ENCODE measurements at regions of chr11 and their contacts with region 1.

Region 1: GRCh38 chr11:33996498-33997454 is 54.8 kb upstream of the CAPRIN1 start:
- DNase-seq: peak; percentile 65
- ATAC-seq: peak; percentile 100
- H3K4me3 ChIP-seq: no peak overlapping the region
- H3K27ac ChIP-seq: no peak overlapping the region
- H3K4me1 ChIP-seq: no peaks in the 10 kb centered on the region
- H3K27me3 ChIP-seq: peaks cover 16% of the 10 kb centered on the region
- CTCF ChIP-seq: peak; percentile 76
- POLR2A ChIP-seq: no peak
- RAD21 ChIP-seq: peak; percentile 80

Region 2: GRCh38 chr11:33912405-33913361 is 84.1 kb before region 1 on chr11:
- CTCF ChIA-PET with region 1: no interaction called
- POLR2A ChIA-PET with region 1: no interaction called
- dilution Hi-C with region 1: no loop called
- in situ Hi-C with region 1: no loop called
- intact Hi-C with region 1: no loop called
- DNase-seq: peak; percentile 90
- ATAC-seq: peak; percentile 83
- H3K4me3 ChIP-seq: no peak overlapping the region
- H3K27ac ChIP-seq: no peak overlapping the region
- H3K4me1 ChIP-seq: peaks cover 3% of the 10 kb centered on the region; the same call in 1 of the 2 replicates
- H3K27me3 ChIP-seq: peaks cover 18% of the 10 kb centered on the region
- CTCF ChIP-seq: no peak
- POLR2A ChIP-seq: no peak
- RAD21 ChIP-seq: no peak

Region 3: GRCh38 chr11:34051349-34052035 is 54.7 kb after region 1 on chr11 and contains the start of gene CAPRIN1:
- CTCF ChIA-PET with region 1: no interaction called
- POLR2A ChIA-PET with region 1: no interaction called
- dilution Hi-C with region 1: no loop called
- in situ Hi-C with region 1: no loop called
- intact Hi-C with region 1: loop called (anchors 2 kb)
- DNase-seq: peak; percentile 83
- ATAC-seq: peak; percentile 87
- H3K4me3 ChIP-seq: peak within 1 kb of the TSS; percentile 67
- H3K27ac ChIP-seq: peak within 1 kb of the TSS; percentile 99
- H3K4me1 ChIP-seq: peaks cover 4% of the 10 kb centered on the region; the same call in 1 of the 2 replicates
- H3K27me3 ChIP-seq: no peaks in the 10 kb centered on the region
- CTCF ChIP-seq: no peak
- POLR2A ChIP-seq: peak; percentile 70
- RAD21 ChIP-seq: no peak
- total RNA-seq, gene CAPRIN1: 253 and 266 TPM in 2 replicates

Region 4: DNA sequence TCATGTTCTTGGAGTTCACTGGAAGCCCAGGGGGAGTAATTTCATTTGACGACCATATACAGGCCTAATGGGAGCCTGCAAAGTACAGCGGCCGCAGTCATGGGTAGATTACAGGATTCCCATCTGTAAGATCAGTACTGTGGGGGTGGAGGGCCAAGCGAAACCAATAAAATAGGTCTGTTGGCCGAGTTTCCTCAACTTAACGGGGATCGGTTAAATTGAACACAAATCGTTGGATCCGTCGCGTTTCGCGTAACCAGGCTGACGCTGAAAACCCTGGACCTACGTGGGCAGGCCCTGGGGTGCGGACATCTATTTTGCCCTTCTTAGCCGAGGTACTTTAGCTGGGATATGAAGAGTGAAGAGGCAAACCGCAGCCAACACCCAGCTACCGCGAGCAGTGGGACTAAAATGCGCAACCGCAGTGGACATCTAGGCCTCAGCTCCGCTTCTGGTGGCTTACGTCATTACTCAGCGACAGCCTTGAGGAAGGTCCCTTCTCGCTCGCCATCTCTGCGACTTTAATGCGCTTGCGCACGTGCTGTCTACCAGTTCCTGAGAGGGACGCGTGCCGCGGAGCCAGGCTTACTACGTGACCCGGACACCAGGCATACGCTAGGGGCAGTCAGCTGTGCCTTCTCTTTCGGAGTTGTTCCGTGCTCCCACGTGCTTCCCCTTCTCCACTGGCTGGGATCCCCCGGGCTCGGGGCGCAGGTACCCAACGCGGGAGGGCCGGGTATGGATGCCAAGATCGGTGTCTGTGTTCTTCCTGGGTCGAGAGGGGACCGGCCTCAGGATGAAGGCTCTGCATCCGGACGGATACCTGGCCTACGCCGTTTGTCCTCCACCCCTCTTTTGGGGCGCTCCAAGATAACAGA is 108.5 kb after region 1 on chr11 and contains the start of gene NAT10:
- CTCF ChIA-PET with region 1: no interaction called
- POLR2A ChIA-PET with region 1: no interaction called
- dilution Hi-C with region 1: no loop called
- in situ Hi-C with region 1: no loop called
- intact Hi-C with region 1: loop called (anchors 2 kb)
- DNase-seq: peak; percentile 99
- ATAC-seq: peak; percentile 89
- H3K4me3 ChIP-seq: peak within 1 kb of the TSS; percentile 62
- H3K27ac ChIP-seq: peak within 1 kb of the TSS; percentile 78
- H3K4me1 ChIP-seq: peaks cover 2% of the 10 kb centered on the region; the same call in 1 of the 2 replicates
- H3K27me3 ChIP-seq: no peaks in the 10 kb centered on the region
- CTCF ChIP-seq: no peak; the same call in 1 of the 2 replicates
- POLR2A ChIP-seq: peak; percentile 80
- RAD21 ChIP-seq: no peak
- total RNA-seq, gene NAT10: 31.9 and 34.8 TPM in 2 replicates

Region 5: DNA sequence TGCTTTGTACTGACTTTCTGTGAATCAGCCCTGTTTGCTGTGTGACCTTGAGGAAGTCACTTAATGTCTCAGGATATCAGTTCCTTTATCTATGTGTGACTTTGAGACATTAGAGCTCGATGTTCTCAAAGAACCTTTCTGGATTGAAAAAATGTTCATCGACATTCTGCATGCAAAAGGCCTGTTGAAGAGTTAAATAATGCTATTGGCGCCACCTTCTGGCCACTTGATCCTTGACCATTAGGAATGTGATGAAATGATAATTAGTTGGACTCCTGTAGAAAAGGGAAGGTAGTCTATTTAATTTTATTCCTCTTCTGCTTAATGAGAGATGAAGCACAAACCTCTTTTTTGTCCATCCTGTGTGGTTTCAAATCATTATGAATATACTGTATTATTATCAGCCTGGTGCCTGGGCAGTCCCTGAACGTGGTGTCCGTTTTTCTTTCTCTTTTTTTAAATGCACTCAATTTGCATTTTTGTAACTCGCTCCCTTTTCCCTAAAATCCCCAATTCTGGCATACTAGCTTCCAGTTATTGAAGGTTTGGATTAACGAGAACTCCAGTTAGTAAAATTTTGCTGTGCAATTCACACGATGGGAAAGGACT is 496.1 kb after region 1 on chr11:
- CTCF ChIA-PET with region 1: no interaction called
- POLR2A ChIA-PET with region 1: no interaction called
- dilution Hi-C with region 1: no loop called
- in situ Hi-C with region 1: no loop called
- intact Hi-C with region 1: loop called (anchors 10 kb)
- DNase-seq: peak; percentile 51
- ATAC-seq: peak; percentile 75
- H3K4me3 ChIP-seq: no peak overlapping the region
- H3K27ac ChIP-seq: no peak overlapping the region
- H3K4me1 ChIP-seq: no peaks in the 10 kb centered on the region
- H3K27me3 ChIP-seq: peaks cover 46% of the 10 kb centered on the region
- CTCF ChIP-seq: peak; percentile 69
- POLR2A ChIP-seq: no peak
- RAD21 ChIP-seq: peak; percentile 52